ENCODE measurements at regions of chr1 and their contacts with region 1.

Region 1: GRCh38 chr1:160607011-160607671 is 27.8 kb upstream of the CD84 start:
- DNase-seq: no peak
- ATAC-seq: peak; percentile 93 to 97 (median 95)
- H3K4me3 ChIP-seq: no peak overlapping the region
- H3K27ac ChIP-seq: peak overlapping the region in 1 of 3 donors; percentile 26
- H3K4me1 ChIP-seq: peaks cover 0 to 20% (median 0%) of the 10 kb centered on the region in 4 donors
- H3K27me3 ChIP-seq: no peaks in the 10 kb centered on the region
- CTCF ChIP-seq: peak; percentile 72 to 90 (median 76)
- POLR2A ChIP-seq: no peak

Region 2: DNA sequence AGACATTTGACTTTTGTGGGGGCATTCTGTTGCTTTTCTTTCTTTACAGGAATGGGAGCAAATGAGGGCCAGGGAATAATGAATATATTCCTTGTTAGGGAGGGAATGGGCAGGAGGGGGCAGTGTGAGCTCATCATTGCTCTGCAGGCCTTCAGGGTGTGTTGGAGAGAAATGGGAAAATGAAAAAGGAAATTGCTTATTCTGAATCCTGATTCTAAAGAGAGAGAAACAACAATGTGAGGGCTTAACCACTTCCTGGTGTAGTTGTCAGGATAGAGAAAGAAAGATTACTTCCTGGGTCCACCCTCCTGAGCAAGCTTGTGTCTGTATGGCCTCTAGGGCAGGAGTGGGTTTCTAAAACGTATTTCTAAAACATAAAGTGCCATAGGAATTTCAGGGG is 178.5 kb before region 1 on chr1:
- intact Hi-C with region 1: loop called (anchors 5 kb)
- DNase-seq: peak in 2 of 3 donors; percentile 50 to 57
- ATAC-seq: peak; percentile 82 to 91 (median 88)
- H3K4me3 ChIP-seq: no peak overlapping the region
- H3K27ac ChIP-seq: no peak overlapping the region
- H3K4me1 ChIP-seq: no peaks in the 10 kb centered on the region
- H3K27me3 ChIP-seq: no peaks in the 10 kb centered on the region
- CTCF ChIP-seq: peak; percentile 59 to 65 (median 64)
- POLR2A ChIP-seq: no peak

Region 3: DNA sequence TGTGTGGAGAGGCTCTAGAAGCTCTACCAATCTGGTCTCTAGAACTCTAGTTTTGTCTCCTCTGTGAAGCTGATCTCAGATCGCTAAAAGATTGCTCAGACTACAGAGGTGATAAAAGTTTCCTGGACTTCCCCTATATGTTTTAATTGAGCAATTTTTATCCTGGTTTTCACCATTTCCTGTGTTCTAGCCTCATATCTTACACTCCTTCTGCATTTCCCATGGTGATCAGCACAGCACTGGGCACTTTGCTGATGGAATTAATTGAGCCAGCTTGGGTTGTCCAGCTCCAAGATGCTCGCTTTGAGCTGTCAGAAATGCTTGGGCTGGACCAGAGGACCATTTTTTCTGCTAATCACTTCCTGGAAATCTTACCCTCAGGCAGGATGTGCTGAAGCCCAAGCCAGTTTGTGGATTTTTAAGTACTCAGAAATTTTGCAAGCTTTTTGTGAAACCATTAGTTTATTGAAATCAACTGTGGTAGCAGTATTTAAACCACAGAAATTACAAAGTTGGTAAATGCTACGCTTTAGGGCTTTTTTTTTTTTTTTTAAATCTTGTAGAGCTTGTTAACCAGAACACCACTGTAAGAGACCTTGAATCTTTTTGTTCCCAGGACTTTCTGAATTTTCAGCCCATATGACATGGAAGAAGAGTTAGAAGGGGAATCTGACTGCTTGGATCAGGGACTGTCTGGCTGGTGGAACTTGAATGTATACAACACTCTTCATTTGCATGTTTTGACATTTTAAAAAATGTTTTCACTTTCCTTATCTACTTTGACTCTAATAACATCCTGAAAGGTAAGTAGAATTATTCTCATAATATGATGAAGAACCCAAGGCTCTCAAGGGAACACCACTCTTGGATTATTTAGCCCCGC is 76.1 kb after region 1 on chr1:
- intact Hi-C with region 1: no loop called
- DNase-seq: no peak
- ATAC-seq: peak in 2 of 4 donors; percentile 28 to 30
- H3K4me3 ChIP-seq: no peak overlapping the region
- H3K27ac ChIP-seq: no peak overlapping the region
- H3K4me1 ChIP-seq: no peaks in the 10 kb centered on the region
- H3K27me3 ChIP-seq: no peaks in the 10 kb centered on the region
- CTCF ChIP-seq: no peak
- POLR2A ChIP-seq: no peak

Measured in right lobe of liver (tissue), 6 donors.